A673 (cell line): ENCODE measurements at regions of chr20 and their contacts with region 1.

Region 1: GRCh38 chr20:2651772-2652723 is at the start of gene NOP56:
- DNase-seq: peak; percentile 97
- H3K4me3 ChIP-seq: peak within 1 kb of the TSS; percentile 100
- H3K27ac ChIP-seq: peak within 1 kb of the TSS; percentile 90
- H3K4me1 ChIP-seq: peaks cover 25% of the 10 kb centered on the region
- H3K27me3 ChIP-seq: no peaks in the 10 kb centered on the region
- CTCF ChIP-seq: no peak
- total RNA-seq, gene NOP56: 607 and 704 TPM in 2 replicates

Region 2: DNA sequence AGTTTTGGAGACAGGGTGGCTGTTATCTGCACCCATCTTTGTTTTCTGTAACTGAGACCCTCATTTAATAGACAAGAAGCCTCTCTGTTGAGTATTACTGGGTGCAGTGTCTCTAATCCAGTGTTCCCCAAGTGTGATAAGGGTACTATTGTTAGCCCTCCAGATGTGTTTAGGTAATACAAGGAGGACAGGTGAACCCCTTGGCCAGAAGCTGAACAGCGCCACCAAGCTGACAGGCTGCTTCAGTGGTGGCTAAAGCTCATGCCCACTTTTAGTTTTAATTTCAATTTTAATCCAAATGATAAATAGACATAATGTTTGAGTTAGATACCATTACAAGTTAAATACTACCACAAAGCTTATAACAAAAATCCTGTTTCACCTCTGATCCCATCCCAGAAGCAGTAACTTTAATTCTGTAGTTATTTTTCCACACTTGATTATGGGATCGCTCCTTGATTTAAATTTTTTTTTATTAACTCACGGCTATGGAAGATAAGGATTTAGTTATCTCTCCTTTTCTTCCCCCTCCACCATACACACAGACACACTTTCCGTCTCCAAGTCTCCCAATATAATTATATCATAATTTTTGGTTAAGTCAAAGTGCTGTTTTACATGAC is 558.8 kb before region 1 on chr20:
- CTCF ChIA-PET with region 1: no interaction called
- POLR2A ChIA-PET with region 1: no interaction called
- intact Hi-C with region 1: no loop called
- DNase-seq: no peak
- H3K4me3 ChIP-seq: no peak overlapping the region
- H3K27ac ChIP-seq: no peak overlapping the region
- H3K4me1 ChIP-seq: peaks cover 5% of the 10 kb centered on the region
- H3K27me3 ChIP-seq: peaks cover 10% of the 10 kb centered on the region
- CTCF ChIP-seq: peak; percentile 77

Region 3: GRCh38 chr20:2470423-2471193 is 181.4 kb before region 1 on chr20 and contains the start of gene SNRPB:
- CTCF ChIA-PET with region 1: no interaction called
- POLR2A ChIA-PET with region 1: interaction called, 6 read pairs
- intact Hi-C with region 1: loop called (anchors 2 kb)
- DNase-seq: peak; percentile 99
- H3K4me3 ChIP-seq: peak within 1 kb of the TSS; percentile 72
- H3K27ac ChIP-seq: peak within 1 kb of the TSS; percentile 95
- H3K4me1 ChIP-seq: peaks cover 10% of the 10 kb centered on the region
- H3K27me3 ChIP-seq: no peaks in the 10 kb centered on the region
- CTCF ChIP-seq: no peak
- total RNA-seq, gene SNRPB: 493 and 522 TPM in 2 replicates

Region 4: DNA sequence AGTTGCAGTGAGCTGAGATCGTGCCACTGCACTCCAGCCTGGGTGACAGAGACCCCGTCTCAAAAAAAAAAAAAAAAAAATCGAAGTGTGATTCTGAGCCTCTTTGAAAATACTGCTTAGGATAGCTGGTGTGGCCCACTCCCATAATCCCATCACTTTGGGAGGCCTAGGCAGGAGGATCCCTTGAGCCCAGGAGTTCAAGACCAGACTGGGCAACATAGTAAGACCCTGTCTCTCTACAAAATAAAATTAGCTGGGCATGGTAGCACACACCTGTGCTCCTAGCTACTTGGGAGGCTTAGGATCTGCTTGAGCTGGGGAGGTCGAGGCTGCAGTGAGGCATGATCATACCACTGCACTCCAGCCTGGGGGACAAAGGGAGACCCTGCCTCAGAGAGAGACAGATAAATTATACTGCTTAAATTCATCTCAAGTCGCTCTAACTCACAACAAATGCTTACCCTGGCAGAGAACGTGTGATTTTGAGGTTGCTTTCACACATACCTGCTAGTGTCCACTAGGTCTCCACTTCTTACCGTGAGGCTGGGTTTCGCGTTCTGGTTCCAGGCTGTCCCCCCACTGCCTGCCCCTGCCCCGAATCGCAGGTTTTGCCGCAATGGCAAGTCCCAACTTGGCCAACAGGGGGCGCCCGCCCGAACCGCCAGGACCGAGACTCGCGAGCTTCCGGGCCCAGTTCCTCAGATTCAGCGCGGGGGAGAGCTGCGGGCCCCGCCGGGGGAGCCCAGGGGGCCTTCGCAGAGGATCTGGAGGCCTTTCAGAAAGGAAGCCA is 127.9 kb before region 1 on chr20:
- CTCF ChIA-PET with region 1: interaction called, 5 read pairs
- POLR2A ChIA-PET with region 1: interaction called, 3 read pairs
- intact Hi-C with region 1: loop called (anchors 2 kb)
- DNase-seq: peak; percentile 91
- H3K4me3 ChIP-seq: peak overlapping the region; percentile 91
- H3K27ac ChIP-seq: peak overlapping the region; percentile 97
- H3K4me1 ChIP-seq: peaks cover 2% of the 10 kb centered on the region
- H3K27me3 ChIP-seq: no peaks in the 10 kb centered on the region
- CTCF ChIP-seq: peak; percentile 97

Region 5: DNA sequence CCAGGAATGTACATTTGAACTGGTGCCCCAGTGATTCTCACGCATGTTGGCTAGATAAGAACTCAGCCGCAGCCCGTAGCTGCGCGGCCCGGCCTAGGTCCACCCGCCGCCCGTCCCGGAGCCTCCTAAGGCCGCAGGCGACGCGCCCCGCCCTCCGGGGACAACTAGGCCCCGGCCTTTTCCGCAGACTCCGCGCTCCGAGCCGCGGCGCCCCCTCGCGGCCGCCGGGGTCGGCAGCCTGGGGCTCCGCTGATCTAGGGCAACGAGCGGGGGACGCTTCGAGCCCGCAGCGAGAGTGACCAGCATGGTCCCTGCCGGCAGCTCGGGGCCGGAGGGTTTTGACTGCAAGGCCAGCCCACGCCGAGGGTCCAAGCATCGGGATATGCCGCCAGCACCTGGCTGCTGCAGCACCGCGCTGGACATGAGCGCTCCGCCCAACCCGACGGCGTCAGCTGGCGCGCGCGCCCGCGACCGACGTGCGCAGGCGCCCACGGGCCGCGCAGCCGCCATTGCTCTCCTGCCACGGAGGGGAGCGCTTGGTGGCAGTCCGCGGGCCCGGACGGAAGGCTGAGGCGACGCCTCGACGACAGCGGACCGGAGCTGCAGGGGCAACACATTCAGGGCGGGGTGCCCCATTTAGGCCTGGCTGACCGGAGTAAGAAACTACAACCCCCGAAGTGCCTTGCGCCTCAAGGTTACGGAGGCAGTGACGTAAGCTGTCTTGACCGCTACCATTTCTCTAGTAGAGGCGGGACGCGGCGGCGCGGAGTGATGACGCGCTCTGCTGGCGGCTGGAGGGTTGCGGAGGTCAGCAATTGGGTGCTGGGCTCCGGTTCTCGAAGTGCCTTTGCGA is 1168.2 kb after region 1 on chr20 and contains the start of gene AP5S1:
- CTCF ChIA-PET with region 1: no interaction called
- POLR2A ChIA-PET with region 1: interaction called, 14 read pairs
- intact Hi-C with region 1: no loop called
- DNase-seq: peak; percentile 95
- H3K4me3 ChIP-seq: peak within 1 kb of the TSS; percentile 73
- H3K27ac ChIP-seq: peak within 1 kb of the TSS; percentile 99
- H3K4me1 ChIP-seq: peaks cover 14% of the 10 kb centered on the region
- H3K27me3 ChIP-seq: no peaks in the 10 kb centered on the region
- CTCF ChIP-seq: peak; percentile 97
- total RNA-seq, gene AP5S1: 15.0 and 17.5 TPM in 2 replicates